ENCODE measurements at regions of chr2 and their contacts with region 1.

Region 1: GRCh38 chr2:98999159-98999558 is 63.1 kb upstream of the CRACDL start:
- DNase-seq: no peak
- ATAC-seq: no peak
- H3K4me3 ChIP-seq: no peak overlapping the region
- H3K4me3 Mint-ChIP-seq: no peak overlapping the region
- H3K27ac ChIP-seq: no peak overlapping the region
- H3K27ac Mint-ChIP-seq: no peak overlapping the region
- H3K4me1 ChIP-seq: no peaks in the 10 kb centered on the region
- H3K4me1 Mint-ChIP-seq: peaks cover 0 to 4% (median 0%) of the 10 kb centered on the region in 7 donors
- H3K27me3 ChIP-seq: no peaks in the 10 kb centered on the region
- H3K27me3 Mint-ChIP-seq: peaks cover 0 to 12% (median 0%) of the 10 kb centered on the region in 5 donors

Region 2: GRCh38 chr2:98346311-98347236 is 652.6 kb before region 1 on chr2 and contains the start of gene CNGA3:
- CTCF ChIA-PET with region 1: no interaction called
- POLR2A ChIA-PET with region 1: no interaction called
- intact Hi-C with region 1: no loop called
- DNase-seq: peak in 6 of 9 donors; percentile 19 to 44 (median 24)
- ATAC-seq: no peak
- H3K4me3 ChIP-seq: no peak within 1 kb of the TSS
- H3K4me3 Mint-ChIP-seq: peak within 1 kb of the TSS in 9 of 10 donors; percentile 14 to 70 (median 49)
- H3K27ac ChIP-seq: no peak within 1 kb of the TSS
- H3K27ac Mint-ChIP-seq: no peak within 1 kb of the TSS
- H3K4me1 ChIP-seq: no peaks in the 10 kb centered on the region
- H3K4me1 Mint-ChIP-seq: peaks cover 0 to 19% (median 16%) of the 10 kb centered on the region in 7 donors
- H3K27me3 ChIP-seq: peaks cover 7 to 9% of the 10 kb centered on the region in 2 donors
- H3K27me3 Mint-ChIP-seq: peaks cover 72 to 83% (median 79%) of the 10 kb centered on the region in 5 donors
- total RNA-seq, gene CNGA3: not detected

Region 3: DNA sequence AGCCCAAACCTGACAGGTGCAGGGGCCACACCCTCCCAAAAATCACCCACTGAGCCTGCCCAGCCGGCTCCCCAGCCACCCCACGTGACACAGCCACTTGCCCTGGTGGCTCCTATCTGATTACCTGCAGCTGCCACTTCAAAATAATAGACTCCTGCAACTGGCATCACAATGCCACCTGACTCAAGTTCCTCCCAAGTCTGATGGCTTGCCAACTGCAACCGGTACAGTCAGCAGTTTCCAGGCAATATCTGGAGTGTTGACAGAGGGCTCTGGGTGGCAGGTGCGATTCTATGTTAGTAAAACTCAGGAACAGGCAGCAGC is 129.3 kb before region 1 on chr2:
- CTCF ChIA-PET with region 1: no interaction called
- POLR2A ChIA-PET with region 1: no interaction called
- intact Hi-C with region 1: no loop called
- DNase-seq: no peak
- ATAC-seq: no peak
- H3K4me3 ChIP-seq: no peak overlapping the region
- H3K4me3 Mint-ChIP-seq: no peak overlapping the region
- H3K27ac ChIP-seq: no peak overlapping the region
- H3K27ac Mint-ChIP-seq: no peak overlapping the region
- H3K4me1 ChIP-seq: no peaks in the 10 kb centered on the region
- H3K4me1 Mint-ChIP-seq: peaks cover 0 to 2% (median 0%) of the 10 kb centered on the region in 7 donors
- H3K27me3 ChIP-seq: no peaks in the 10 kb centered on the region
- H3K27me3 Mint-ChIP-seq: peaks cover 0 to 14% (median 0%) of the 10 kb centered on the region in 5 donors

Region 4: GRCh38 chr2:98972582-98973167 is 26.5 kb before region 1 on chr2:
- CTCF ChIA-PET with region 1: interaction called, 4 read pairs
- POLR2A ChIA-PET with region 1: no interaction called
- intact Hi-C with region 1: loop called in 1 of 2 experiments (anchors 1 kb)
- DNase-seq: no peak
- ATAC-seq: no peak
- H3K4me3 ChIP-seq: no peak overlapping the region
- H3K4me3 Mint-ChIP-seq: no peak overlapping the region
- H3K27ac ChIP-seq: no peak overlapping the region
- H3K27ac Mint-ChIP-seq: no peak overlapping the region
- H3K4me1 ChIP-seq: no peaks in the 10 kb centered on the region
- H3K4me1 Mint-ChIP-seq: no peaks in the 10 kb centered on the region
- H3K27me3 ChIP-seq: peaks cover 0 to 13% of the 10 kb centered on the region in 2 donors
- H3K27me3 Mint-ChIP-seq: peaks cover 13 to 49% (median 31%) of the 10 kb centered on the region in 5 donors

Region 5: DNA sequence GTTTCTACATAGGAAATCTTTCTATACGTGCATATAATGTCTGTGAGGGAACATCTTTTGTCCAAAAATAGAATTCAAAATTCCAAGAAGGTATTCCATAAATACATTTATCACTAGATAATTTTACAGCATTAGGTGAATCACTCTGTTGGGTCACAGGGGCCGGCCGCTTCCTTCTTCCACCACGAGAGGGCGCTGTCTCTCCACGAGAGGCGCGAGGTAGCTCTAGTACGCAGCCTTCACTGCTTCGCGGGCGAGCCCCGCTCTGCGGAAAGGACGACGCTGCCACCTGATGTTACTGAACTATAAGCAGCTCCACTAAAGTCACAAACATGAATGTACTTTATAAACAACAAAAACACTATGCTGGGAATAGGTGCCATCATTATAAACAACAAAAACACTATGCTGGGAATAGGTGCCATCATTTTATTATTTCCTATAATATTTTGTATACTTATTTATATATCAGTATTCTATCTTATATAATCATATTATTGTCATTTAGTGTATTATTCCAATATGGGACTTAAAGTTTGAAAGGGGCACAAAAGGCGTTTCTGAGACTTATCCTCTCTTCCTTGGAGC is 560.0 kb after region 1 on chr2:
- CTCF ChIA-PET with region 1: no interaction called
- POLR2A ChIA-PET with region 1: no interaction called
- intact Hi-C with region 1: no loop called
- DNase-seq: peak; percentile 52 to 78 (median 68)
- ATAC-seq: peak; percentile 96
- H3K4me3 ChIP-seq: no peak overlapping the region
- H3K4me3 Mint-ChIP-seq: peak overlapping the region in 3 of 10 donors; percentile 9 to 65 (median 36)
- H3K27ac ChIP-seq: no peak overlapping the region
- H3K27ac Mint-ChIP-seq: peak overlapping the region in 1 of 9 donors; percentile 62
- H3K4me1 ChIP-seq: no peaks in the 10 kb centered on the region
- H3K4me1 Mint-ChIP-seq: peaks cover 0 to 5% (median 0%) of the 10 kb centered on the region in 7 donors
- H3K27me3 ChIP-seq: no peaks in the 10 kb centered on the region
- H3K27me3 Mint-ChIP-seq: peaks cover 0 to 9% (median 0%) of the 10 kb centered on the region in 5 donors